Dorsolateral prefrontal cortex (tissue), 120 donors: ENCODE measurements at regions of chr3 and their contacts with region 1.

Region 1: DNA sequence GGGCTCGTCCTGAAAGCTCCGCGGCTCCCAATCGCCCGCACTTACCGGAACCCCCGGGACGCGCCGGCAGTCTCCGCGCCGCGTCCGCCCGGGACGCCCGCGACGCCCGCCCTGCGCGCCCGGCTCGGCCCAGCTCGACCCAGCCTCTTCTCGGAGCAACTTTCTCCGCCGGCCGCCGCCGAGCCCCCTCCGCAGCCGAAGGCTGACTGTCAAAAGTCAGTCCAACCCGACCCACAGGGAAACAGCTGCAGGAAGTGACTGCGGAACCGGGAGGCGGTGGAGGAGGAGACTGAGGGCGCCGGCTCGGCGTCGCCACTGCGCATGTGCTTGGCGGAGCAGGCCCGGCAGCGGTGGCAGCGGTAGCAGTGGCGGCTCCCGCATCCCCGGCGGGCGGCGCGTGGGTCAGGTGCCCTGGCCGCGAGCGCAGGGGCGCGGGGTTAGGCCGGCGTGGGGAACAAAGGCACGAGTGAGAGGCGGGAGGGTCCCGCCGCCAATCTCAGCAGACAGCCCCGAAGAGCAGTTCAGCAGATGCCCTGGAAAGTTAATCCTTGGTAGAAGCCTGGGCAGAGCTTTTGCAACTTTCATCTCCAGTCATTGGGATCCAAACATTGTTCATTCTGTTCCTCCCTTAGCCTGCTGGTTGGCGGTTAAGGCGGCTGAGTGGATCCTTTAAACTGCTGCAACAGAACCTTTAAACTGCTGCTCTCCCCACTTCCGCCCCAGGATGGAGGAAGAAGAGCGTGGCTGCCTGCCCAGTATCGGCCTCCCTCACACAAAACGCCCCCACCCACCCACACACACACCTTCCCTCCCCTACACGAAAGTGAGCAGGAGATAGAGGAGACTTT is at the start of gene ZMAT3:
- DNase-seq: peak; percentile 76 to 95 (median 86)
- H3K4me3 ChIP-seq: peak within 1 kb of the TSS; percentile 55 to 98 (median 86)
- H3K27ac ChIP-seq: peak within 1 kb of the TSS; percentile 11 to 96 (median 89)
- H3K27me3 ChIP-seq: no peaks in the 10 kb centered on the region
- CTCF ChIP-seq: peak in 32 of 56 donors; percentile 4 to 54 (median 33)
- total RNA-seq, gene ZMAT3: 40.9 to 107 (median 77.8) TPM

Region 2: GRCh38 chr3:177852001-177852816 is 1219.6 kb before region 1 on chr3:
- intact Hi-C with region 1: no loop called
- DNase-seq: no peak
- H3K4me3 ChIP-seq: no peak overlapping the region
- H3K27ac ChIP-seq: no peak overlapping the region
- H3K27me3 ChIP-seq: no peaks in the 10 kb centered on the region
- CTCF ChIP-seq: no peak

Region 3: GRCh38 chr3:179015551-179016020 is 56.2 kb before region 1 on chr3:
- intact Hi-C with region 1: loop called (anchors 2 to 10 kb)
- DNase-seq: peak in 2 of 10 donors; percentile 31 to 43
- H3K4me3 ChIP-seq: no peak overlapping the region
- H3K27ac ChIP-seq: peak overlapping the region in 3 of 59 donors; percentile 9 to 48 (median 11)
- H3K27me3 ChIP-seq: no peaks in the 10 kb centered on the region
- CTCF ChIP-seq: peak; percentile 78 to 98 (median 92)